A549 (cell line): ENCODE measurements at regions of chrX and their contacts with region 1.

Region 1: GRCh38 chrX:47217642-47218279 is 720 bp upstream of the CDK16 start:
- DNase-seq: peak; percentile 90 to 99
- ATAC-seq: peak; percentile 81 to 92
- H3K4me3 ChIP-seq: peak overlapping the region; percentile 100
- H3K27ac ChIP-seq: peak overlapping the region; percentile 100
- H3K4me1 ChIP-seq: peaks cover 28% of the 10 kb centered on the region
- CTCF ChIP-seq: no peak
- EP300 ChIP-seq: no peak
- POLR2A ChIP-seq: peak; percentile 21
- RAD21 ChIP-seq: no peak

Region 2: GRCh38 chrX:47200385-47201150 is 17.2 kb before region 1 on chrX:
- CTCF ChIA-PET with region 1: interaction called, 3 read pairs
- POLR2A ChIA-PET with region 1: interaction called, 12 read pairs
- DNase-seq: peak; percentile 48 to 88
- ATAC-seq: peak; percentile 90 to 92
- H3K4me3 ChIP-seq: no peak overlapping the region
- H3K27ac ChIP-seq: peak overlapping the region; percentile 61 to 86
- H3K4me1 ChIP-seq: peaks cover 58% of the 10 kb centered on the region
- CTCF ChIP-seq: no peak; the same call in 2 of the 3 replicates
- EP300 ChIP-seq: no peak
- POLR2A ChIP-seq: no peak
- RAD21 ChIP-seq: peak in 1 of 2 experiments; percentile 23; a peak in 1 of 5 replicates

Region 3: GRCh38 chrX:47233337-47234113 is 15.8 kb after region 1 on chrX:
- CTCF ChIA-PET with region 1: no interaction called
- POLR2A ChIA-PET with region 1: interaction called, 43 read pairs
- DNase-seq: peak; percentile 81 to 99
- ATAC-seq: peak; percentile 93 to 94
- H3K4me3 ChIP-seq: peak overlapping the region; percentile 85
- H3K27ac ChIP-seq: peak overlapping the region; percentile 93 to 95
- H3K4me1 ChIP-seq: peaks cover 22% of the 10 kb centered on the region
- CTCF ChIP-seq: no peak
- EP300 ChIP-seq: no peak
- POLR2A ChIP-seq: peak; percentile 32
- RAD21 ChIP-seq: no peak